Transverse colon (tissue), 4 donors: ENCODE measurements at regions of chr12 and their contacts with region 1.

Region 1: GRCh38 chr12:90978117-90978770 is 23.3 kb upstream of the CCER1 start:
- DNase-seq: no peak
- H3K4me3 ChIP-seq: no peak overlapping the region
- H3K27ac ChIP-seq: peak overlapping the region in 2 of 4 donors; percentile 7
- H3K4me1 ChIP-seq: peaks cover 0 to 4% (median 0%) of the 10 kb centered on the region in 4 donors
- H3K27me3 ChIP-seq: no peaks in the 10 kb centered on the region
- CTCF ChIP-seq: peak; percentile 50 to 67 (median 52)
- EP300 ChIP-seq: no peak
- POLR2A ChIP-seq: no peak

Region 2: DNA sequence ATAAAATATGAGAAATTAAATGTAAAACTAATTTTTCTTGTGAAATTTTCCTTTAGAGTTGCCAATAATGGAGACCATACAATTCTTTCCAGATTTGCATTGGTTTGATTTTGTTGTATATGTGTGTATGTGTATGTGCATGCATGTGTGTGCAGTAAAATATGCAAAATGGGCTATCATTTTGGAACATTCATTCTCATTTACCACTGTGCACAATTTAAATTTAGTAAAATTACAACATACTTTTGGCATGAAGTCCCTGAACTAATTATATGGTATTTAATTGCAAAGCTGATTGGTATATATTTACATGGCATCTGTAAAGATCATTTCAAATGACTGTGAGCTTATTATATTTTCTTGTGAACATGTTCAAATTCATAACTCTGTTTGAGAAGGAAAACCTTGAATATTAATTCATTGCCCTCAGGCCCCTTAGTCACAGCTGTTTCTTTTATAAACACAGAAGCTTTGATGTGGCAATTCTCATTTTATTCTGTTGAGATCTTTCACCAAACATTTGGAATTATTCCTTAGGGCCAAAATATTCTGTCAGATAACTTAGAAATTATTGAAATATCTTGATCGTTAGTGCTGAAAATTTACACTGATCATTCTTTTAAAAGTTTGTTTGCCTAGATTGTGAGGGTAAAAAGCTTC is 62.0 kb after region 1 on chr12:
- in situ Hi-C with region 1: no loop called
- intact Hi-C with region 1: no loop called
- DNase-seq: no peak
- H3K4me3 ChIP-seq: no peak overlapping the region
- H3K27ac ChIP-seq: no peak overlapping the region
- H3K4me1 ChIP-seq: no peaks in the 10 kb centered on the region
- H3K27me3 ChIP-seq: no peaks in the 10 kb centered on the region
- CTCF ChIP-seq: no peak
- EP300 ChIP-seq: no peak
- POLR2A ChIP-seq: no peak

Region 3: GRCh38 chr12:91349476-91349875 is 371.2 kb after region 1 on chr12:
- in situ Hi-C with region 1: loop called in 3 of 4 experiments (anchors 10 to 25 kb)
- intact Hi-C with region 1: no loop called
- DNase-seq: no peak
- H3K4me3 ChIP-seq: no peak overlapping the region
- H3K27ac ChIP-seq: peak overlapping the region in 1 of 4 donors; percentile 18
- H3K4me1 ChIP-seq: no peaks in the 10 kb centered on the region
- H3K27me3 ChIP-seq: no peaks in the 10 kb centered on the region
- CTCF ChIP-seq: no peak
- EP300 ChIP-seq: no peak
- POLR2A ChIP-seq: no peak

Region 4: DNA sequence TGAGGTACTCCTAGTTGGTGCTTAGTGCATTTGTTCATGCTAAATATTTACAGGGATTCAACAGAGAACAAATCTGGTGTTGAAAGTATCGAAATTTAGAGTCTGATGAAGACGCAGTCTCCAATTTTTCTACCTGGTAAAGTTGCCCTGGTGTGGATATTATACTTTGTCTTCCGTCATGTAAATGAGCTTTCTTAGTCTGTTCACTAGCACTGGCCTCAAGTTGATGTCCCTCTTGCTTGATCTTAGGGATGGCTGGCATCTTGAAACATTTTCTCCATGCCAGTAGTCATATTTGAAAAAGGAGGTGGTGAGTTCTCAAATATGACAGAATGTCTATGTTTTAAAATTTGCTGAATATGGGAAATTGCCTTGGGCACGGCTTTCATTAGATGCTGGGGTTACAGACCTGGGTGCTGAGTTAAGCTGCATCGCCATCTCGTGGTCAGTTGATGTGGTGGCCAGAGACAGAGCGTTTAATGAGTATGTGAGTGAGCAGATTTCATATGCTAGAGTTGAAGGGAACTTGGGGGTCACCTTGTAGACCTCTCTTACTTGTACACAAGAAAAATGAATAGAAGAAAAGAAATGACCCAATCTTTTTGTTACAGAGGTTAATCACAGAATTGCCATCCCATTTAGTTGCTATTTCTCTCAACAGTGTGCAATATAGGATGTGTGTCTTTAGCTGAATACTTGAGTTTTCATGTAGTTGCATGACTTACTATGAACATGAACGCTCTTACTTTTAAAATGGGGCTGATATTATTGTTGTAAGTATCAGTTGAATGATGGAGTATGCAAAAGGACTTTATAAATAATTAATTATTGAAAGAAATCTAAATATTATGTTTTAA is 377.1 kb after region 1 on chr12:
- in situ Hi-C with region 1: loop called in 1 of 4 experiments (anchors 25 kb)
- intact Hi-C with region 1: no loop called
- DNase-seq: peak; percentile 73
- H3K4me3 ChIP-seq: no peak overlapping the region
- H3K27ac ChIP-seq: no peak overlapping the region
- H3K4me1 ChIP-seq: peaks cover 0 to 18% (median 3%) of the 10 kb centered on the region in 4 donors
- H3K27me3 ChIP-seq: no peaks in the 10 kb centered on the region
- CTCF ChIP-seq: peak; percentile 79 to 87 (median 79)
- EP300 ChIP-seq: no peak
- POLR2A ChIP-seq: no peak

Region 5: GRCh38 chr12:92208613-92209121 is 1230.4 kb after region 1 on chr12:
- in situ Hi-C with region 1: no loop called
- intact Hi-C with region 1: no loop called
- DNase-seq: no peak
- H3K4me3 ChIP-seq: no peak overlapping the region
- H3K27ac ChIP-seq: peak overlapping the region; percentile 31 to 72 (median 58)
- H3K4me1 ChIP-seq: peaks cover 0 to 15% (median 7%) of the 10 kb centered on the region in 4 donors
- H3K27me3 ChIP-seq: no peaks in the 10 kb centered on the region
- CTCF ChIP-seq: no peak
- EP300 ChIP-seq: no peak
- POLR2A ChIP-seq: no peak